ENCODE measurements at regions of chr1 and their contacts with region 1.

Region 1: GRCh38 chr1:77143529-77144121 is 75.6 kb downstream of the PIGK start:
- DNase-seq: peak; percentile 16
- H3K4me3 ChIP-seq: no peak overlapping the region
- H3K27ac ChIP-seq: no peak overlapping the region
- H3K4me1 ChIP-seq: no peaks in the 10 kb centered on the region
- H3K27me3 ChIP-seq: no peaks in the 10 kb centered on the region
- CTCF ChIP-seq: no peak
- POLR2A ChIP-seq: no peak

Region 2: DNA sequence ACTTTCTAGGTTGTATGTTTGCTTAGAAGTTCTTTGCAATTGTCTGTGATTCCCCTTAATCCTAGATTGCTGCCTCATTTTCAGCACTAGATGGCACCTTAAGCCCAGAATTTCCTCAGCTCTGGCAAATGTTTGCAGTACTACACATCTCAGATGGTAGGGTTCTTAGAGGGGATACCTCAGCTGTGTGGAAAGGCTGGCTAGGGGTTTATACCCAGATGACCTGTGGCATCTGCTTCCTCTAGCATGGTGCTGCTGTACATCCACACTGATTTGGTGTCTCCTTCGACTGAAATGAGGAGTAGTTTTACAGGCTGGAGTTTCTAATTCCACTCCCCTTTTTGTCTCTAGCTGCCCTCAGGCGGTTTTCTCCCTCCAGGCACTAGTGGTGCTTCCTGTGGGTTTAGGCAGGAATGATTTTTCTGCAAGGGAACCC is 1234.9 kb before region 1 on chr1:
- CTCF ChIA-PET with region 1: interaction called, 21 read pairs
- POLR2A ChIA-PET with region 1: no interaction called
- dilution Hi-C with region 1: no loop called
- intact Hi-C with region 1: loop called (anchors 1 kb)
- DNase-seq: peak; percentile 60
- H3K4me3 ChIP-seq: no peak overlapping the region
- H3K27ac ChIP-seq: no peak overlapping the region
- H3K4me1 ChIP-seq: no peaks in the 10 kb centered on the region
- H3K27me3 ChIP-seq: no peaks in the 10 kb centered on the region
- CTCF ChIP-seq: peak; percentile 30 to 45
- POLR2A ChIP-seq: no peak

Region 3: GRCh38 chr1:76035053-76035452 is 1108.6 kb before region 1 on chr1:
- CTCF ChIA-PET with region 1: interaction called, 7 read pairs
- POLR2A ChIA-PET with region 1: no interaction called
- dilution Hi-C with region 1: no loop called
- intact Hi-C with region 1: loop called (anchors 1 kb)
- DNase-seq: peak; percentile 26
- H3K4me3 ChIP-seq: no peak overlapping the region
- H3K27ac ChIP-seq: no peak overlapping the region
- H3K4me1 ChIP-seq: no peaks in the 10 kb centered on the region
- H3K27me3 ChIP-seq: peaks cover 0 to 4% of the 10 kb centered on the region in 2 experiments
- CTCF ChIP-seq: peak; percentile 23 to 25
- POLR2A ChIP-seq: no peak

Region 4: DNA sequence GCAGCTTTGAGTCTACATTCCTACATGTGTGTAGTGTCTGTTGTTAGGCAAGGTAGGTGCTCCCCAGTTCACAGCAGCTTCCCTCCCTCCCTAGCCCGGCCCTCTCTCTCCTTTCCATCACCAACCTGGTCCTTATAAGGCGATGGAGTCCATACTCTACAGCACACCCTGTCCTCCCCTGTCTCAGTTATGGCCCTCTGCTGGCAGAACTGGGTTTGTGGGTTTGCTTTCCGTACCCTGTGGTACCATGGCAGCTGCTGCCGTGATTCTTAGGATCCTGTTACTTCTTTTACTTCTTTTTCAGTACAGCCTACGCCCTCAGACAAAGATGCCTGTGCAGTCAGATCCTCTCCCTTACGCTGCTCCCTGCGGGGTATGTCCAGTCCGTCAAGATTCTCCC is 169.9 kb after region 1 on chr1:
- CTCF ChIA-PET with region 1: no interaction called
- POLR2A ChIA-PET with region 1: no interaction called
- dilution Hi-C with region 1: no loop called
- intact Hi-C with region 1: loop called (anchors 2 kb)
- DNase-seq: peak; percentile 24
- H3K4me3 ChIP-seq: no peak overlapping the region
- H3K27ac ChIP-seq: no peak overlapping the region
- H3K4me1 ChIP-seq: no peaks in the 10 kb centered on the region
- H3K27me3 ChIP-seq: no peaks in the 10 kb centered on the region
- CTCF ChIP-seq: peak; percentile 18 to 55
- POLR2A ChIP-seq: no peak

Region 5: GRCh38 chr1:77533660-77534305 is 390.2 kb after region 1 on chr1:
- CTCF ChIA-PET with region 1: interaction called, 5 read pairs
- POLR2A ChIA-PET with region 1: no interaction called
- dilution Hi-C with region 1: no loop called
- intact Hi-C with region 1: loop called (anchors 1 kb)
- DNase-seq: peak; percentile 80
- H3K4me3 ChIP-seq: no peak overlapping the region
- H3K27ac ChIP-seq: no peak overlapping the region
- H3K4me1 ChIP-seq: peaks cover 22% of the 10 kb centered on the region
- H3K27me3 ChIP-seq: no peaks in the 10 kb centered on the region
- CTCF ChIP-seq: peak; percentile 77 to 81
- POLR2A ChIP-seq: no peak

Measured in endothelial cell of umbilical vein (primary cell).